Activated T-helper 2 cell treated with anti-CD3 and anti-CD28 coated beads, Interferon-gamma antibody, Interleukin-2, Interleukin-4, amounts not matched to agents 10 μg/mL and 5 μg/mL and 100 μg/mL, durations not matched to agents 14 hours and 24 hours and 36 hours (primary cell): ENCODE measurements at regions of chr7 and their contacts with region 1.

Region 1: GRCh38 chr7:56063882-56064625 is at the start of gene SUMF2:
- DNase-seq: peak; percentile 85
- H3K4me3 Mint-ChIP-seq: peak within 1 kb of the TSS; percentile 90
- H3K27ac Mint-ChIP-seq: peak within 1 kb of the TSS; percentile 78
- H3K4me1 Mint-ChIP-seq: peaks cover 38% of the 10 kb centered on the region
- H3K27me3 Mint-ChIP-seq: no peaks in the 10 kb centered on the region
- total RNA-seq, gene SUMF2: 153 and 158 TPM in 2 replicates

Region 2: GRCh38 chr7:56033671-56034432 is 30.2 kb before region 1 on chr7:
- intact Hi-C with region 1: loop called (anchors 2 kb)
- DNase-seq: peak; percentile 75
- H3K4me3 Mint-ChIP-seq: peak overlapping the region; percentile 88
- H3K27ac Mint-ChIP-seq: peak overlapping the region; percentile 75
- H3K4me1 Mint-ChIP-seq: peaks cover 12% of the 10 kb centered on the region
- H3K27me3 Mint-ChIP-seq: no peaks in the 10 kb centered on the region

Region 3: GRCh38 chr7:56106108-56107073 is 42.3 kb after region 1 on chr7 and contains the start of gene CHCHD2:
- intact Hi-C with region 1: loop called (anchors 1 kb)
- DNase-seq: peak; percentile 93
- H3K4me3 Mint-ChIP-seq: peak within 1 kb of the TSS; percentile 99
- H3K27ac Mint-ChIP-seq: peak within 1 kb of the TSS; percentile 99
- H3K4me1 Mint-ChIP-seq: peaks cover 21% of the 10 kb centered on the region
- H3K27me3 Mint-ChIP-seq: no peaks in the 10 kb centered on the region
- total RNA-seq, gene CHCHD2: 660 TPM in 2 replicates

Region 4: DNA sequence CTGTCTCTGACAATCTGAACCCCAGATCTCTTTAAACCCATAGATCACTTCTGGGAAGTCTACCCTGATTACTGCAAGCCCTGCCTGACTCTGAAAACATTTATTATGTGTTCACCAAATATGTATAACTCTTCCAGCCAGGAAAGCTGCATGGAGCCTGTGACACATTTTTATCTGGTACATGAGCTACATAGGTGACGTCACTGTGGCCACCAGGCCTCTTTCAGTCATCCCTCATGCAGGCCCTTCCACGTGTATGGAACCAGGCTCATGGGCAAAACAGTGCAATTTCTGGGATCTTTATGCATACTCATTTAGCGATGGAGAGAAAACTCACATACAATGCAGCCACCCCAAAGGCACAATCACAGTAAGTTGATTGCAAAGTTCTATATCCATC is 186.1 kb after region 1 on chr7:
- intact Hi-C with region 1: no loop called
- DNase-seq: no peak
- H3K4me3 Mint-ChIP-seq: no peak overlapping the region
- H3K27ac Mint-ChIP-seq: no peak overlapping the region
- H3K4me1 Mint-ChIP-seq: no peaks in the 10 kb centered on the region
- H3K27me3 Mint-ChIP-seq: no peaks in the 10 kb centered on the region